ENCODE measurements at regions of chr7 and their contacts with region 1.

Region 1: GRCh38 chr7:158395780-158396278 is 191.8 kb downstream of the PTPRN2 start:
- DNase-seq: peak; percentile 12 to 48
- ATAC-seq: peak; percentile 49 to 72
- H3K4me3 ChIP-seq: no peak overlapping the region
- H3K27ac ChIP-seq: peak overlapping the region in 1 of 2 experiments; percentile 57; a peak in 1 of 6 replicates
- H3K4me1 ChIP-seq: peaks cover 16% of the 10 kb centered on the region
- CTCF ChIP-seq: no peak
- EP300 ChIP-seq: no peak
- POLR2A ChIP-seq: no peak
- RAD21 ChIP-seq: peak in 1 of 2 experiments; percentile 30; a peak in 2 of 5 replicates

Region 2: GRCh38 chr7:158186864-158187693 is 208.8 kb before region 1 on chr7:
- CTCF ChIA-PET with region 1: no interaction called
- POLR2A ChIA-PET with region 1: no interaction called
- DNase-seq: no peak
- ATAC-seq: no peak
- H3K4me3 ChIP-seq: no peak overlapping the region
- H3K27ac ChIP-seq: no peak overlapping the region
- H3K4me1 ChIP-seq: no peaks in the 10 kb centered on the region
- CTCF ChIP-seq: no peak
- EP300 ChIP-seq: no peak
- POLR2A ChIP-seq: no peak
- RAD21 ChIP-seq: no peak

Region 3: GRCh38 chr7:158329686-158330085 is 66.1 kb before region 1 on chr7:
- CTCF ChIA-PET with region 1: no interaction called
- POLR2A ChIA-PET with region 1: no interaction called
- DNase-seq: no peak
- ATAC-seq: no peak
- H3K4me3 ChIP-seq: no peak overlapping the region
- H3K27ac ChIP-seq: no peak overlapping the region
- H3K4me1 ChIP-seq: no peaks in the 10 kb centered on the region
- CTCF ChIP-seq: no peak
- EP300 ChIP-seq: no peak
- POLR2A ChIP-seq: no peak
- RAD21 ChIP-seq: no peak

Region 4: GRCh38 chr7:158410720-158411119 is 14.9 kb after region 1 on chr7:
- CTCF ChIA-PET with region 1: interaction called, 16 read pairs
- POLR2A ChIA-PET with region 1: no interaction called
- DNase-seq: no peak
- ATAC-seq: peak in 1 of 2 experiments; percentile 30; a peak in 1 of 6 replicates
- H3K4me3 ChIP-seq: no peak overlapping the region
- H3K27ac ChIP-seq: no peak overlapping the region
- H3K4me1 ChIP-seq: no peaks in the 10 kb centered on the region
- CTCF ChIP-seq: no peak
- EP300 ChIP-seq: no peak
- POLR2A ChIP-seq: no peak
- RAD21 ChIP-seq: no peak

Region 5: DNA sequence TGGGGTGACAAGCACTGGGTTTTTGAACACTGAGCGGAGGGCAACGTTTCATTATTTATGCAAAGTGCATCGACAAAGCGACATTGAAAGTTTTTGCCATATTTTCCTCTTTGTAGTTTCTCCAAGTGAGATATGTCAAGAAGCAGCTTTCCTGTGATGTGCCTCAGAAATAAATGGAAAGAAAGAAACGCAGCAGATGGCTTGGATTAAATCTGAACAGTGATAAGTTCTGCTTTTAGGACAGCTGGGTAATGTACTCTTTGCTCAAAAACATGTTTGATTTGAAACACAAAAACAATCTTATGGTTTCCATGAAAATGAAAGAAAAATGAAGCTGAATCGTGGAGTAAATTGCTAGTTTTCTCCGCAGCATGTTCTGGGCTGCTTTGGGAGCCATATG is 25.5 kb after region 1 on chr7:
- CTCF ChIA-PET with region 1: no interaction called
- POLR2A ChIA-PET with region 1: no interaction called
- DNase-seq: no peak
- ATAC-seq: no peak
- H3K4me3 ChIP-seq: no peak overlapping the region
- H3K27ac ChIP-seq: no peak overlapping the region
- H3K4me1 ChIP-seq: no peaks in the 10 kb centered on the region
- CTCF ChIP-seq: no peak
- EP300 ChIP-seq: no peak
- POLR2A ChIP-seq: no peak
- RAD21 ChIP-seq: no peak